ENCODE measurements at regions of chr14 and their contacts with region 1.

Region 1: DNA sequence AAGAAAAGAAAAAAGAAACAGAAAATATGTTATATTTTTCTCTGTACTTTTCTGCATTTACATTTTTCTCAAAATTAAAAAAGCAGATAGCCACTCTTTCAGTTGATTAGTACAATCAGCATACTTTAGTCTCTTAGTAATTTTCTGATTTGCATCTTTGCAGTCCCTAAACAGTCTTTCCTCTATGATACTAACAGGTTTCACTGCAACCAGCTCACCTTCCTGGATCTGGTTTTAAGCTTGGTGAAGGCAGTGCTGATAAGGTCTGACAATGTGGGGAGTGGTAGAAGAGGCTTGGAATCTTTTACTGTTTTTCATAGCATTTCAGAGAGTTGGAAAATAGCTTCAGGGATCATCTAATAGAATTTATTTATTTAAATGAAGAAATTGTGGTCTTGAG is 457.6 kb downstream of the ZFP36L1 start:
- DNase-seq: no peak
- ATAC-seq: peak; percentile 62
- H3K4me3 ChIP-seq: no peak overlapping the region
- H3K27ac ChIP-seq: peak overlapping the region; percentile 58; the same call in 1 of the 2 replicates
- H3K4me1 ChIP-seq: peaks cover 53% of the 10 kb centered on the region
- H3K27me3 ChIP-seq: no peaks in the 10 kb centered on the region
- CTCF ChIP-seq: no peak
- EP300 ChIP-seq: no peak
- POLR2A ChIP-seq: no peak
- RAD21 ChIP-seq: no peak

Region 2: GRCh38 chr14:68349900-68350629 is 14.8 kb after region 1 on chr14:
- CTCF ChIA-PET with region 1: interaction called, 8 read pairs
- POLR2A ChIA-PET with region 1: interaction called, 7 read pairs
- RAD21 ChIA-PET with region 1: no interaction called
- SMC1A ChIA-PET with region 1: interaction called, 15 read pairs
- in situ Hi-C with region 1: no loop called
- intact Hi-C with region 1: no loop called
- DNase-seq: no peak
- ATAC-seq: no peak
- H3K4me3 ChIP-seq: no peak overlapping the region
- H3K27ac ChIP-seq: no peak overlapping the region
- H3K4me1 ChIP-seq: no peaks in the 10 kb centered on the region
- H3K27me3 ChIP-seq: no peaks in the 10 kb centered on the region
- CTCF ChIP-seq: no peak
- EP300 ChIP-seq: no peak
- POLR2A ChIP-seq: no peak
- RAD21 ChIP-seq: no peak

Region 3: DNA sequence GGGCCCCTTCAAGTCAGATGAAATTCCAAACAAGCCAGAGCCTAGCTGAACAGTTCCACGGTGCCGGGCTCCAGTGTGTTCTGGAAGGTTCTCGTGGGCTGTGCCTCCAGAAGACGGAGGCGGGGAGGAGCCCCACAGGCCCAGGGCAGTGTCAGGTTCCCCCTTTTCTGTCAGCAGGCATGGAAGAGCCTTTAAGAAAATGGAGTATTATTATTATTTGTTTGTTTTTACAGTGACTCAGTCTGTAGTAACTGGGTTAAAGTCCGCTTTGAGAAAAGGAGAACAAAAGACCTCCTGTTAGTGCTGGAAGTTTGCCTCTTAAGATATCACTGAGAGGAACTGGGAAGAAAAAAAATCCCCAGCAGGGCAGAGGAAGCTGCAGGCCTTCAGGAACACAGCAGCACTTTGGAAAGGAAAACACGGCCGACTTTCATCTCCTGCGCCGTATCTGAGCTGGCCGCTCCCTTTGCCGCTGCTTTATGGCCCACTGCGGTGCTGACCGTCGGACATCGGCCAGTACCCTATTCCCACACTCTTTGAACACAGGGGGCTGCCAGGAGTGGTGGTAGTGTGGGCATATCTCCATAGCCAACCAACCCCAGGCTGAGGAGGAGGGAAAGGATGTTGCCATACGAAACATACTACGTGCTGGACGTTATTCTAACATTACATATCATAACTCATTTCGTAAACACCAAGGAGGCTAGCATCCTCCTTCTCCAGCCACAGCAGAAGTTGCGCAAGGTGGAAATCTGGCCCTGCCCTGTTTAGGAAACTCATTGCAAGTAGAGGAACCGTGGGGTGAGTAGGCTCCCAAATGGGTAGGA is 263.5 kb after region 1 on chr14:
- CTCF ChIA-PET with region 1: no interaction called
- POLR2A ChIA-PET with region 1: no interaction called
- RAD21 ChIA-PET with region 1: no interaction called
- SMC1A ChIA-PET with region 1: no interaction called
- in situ Hi-C with region 1: no loop called
- intact Hi-C with region 1: no loop called
- DNase-seq: no peak
- ATAC-seq: no peak
- H3K4me3 ChIP-seq: no peak overlapping the region
- H3K27ac ChIP-seq: no peak overlapping the region
- H3K4me1 ChIP-seq: no peaks in the 10 kb centered on the region
- H3K27me3 ChIP-seq: no peaks in the 10 kb centered on the region
- CTCF ChIP-seq: no peak
- EP300 ChIP-seq: no peak
- POLR2A ChIP-seq: no peak
- RAD21 ChIP-seq: no peak